ENCODE measurements at regions of chr20 and their contacts with region 1.

Region 1: DNA sequence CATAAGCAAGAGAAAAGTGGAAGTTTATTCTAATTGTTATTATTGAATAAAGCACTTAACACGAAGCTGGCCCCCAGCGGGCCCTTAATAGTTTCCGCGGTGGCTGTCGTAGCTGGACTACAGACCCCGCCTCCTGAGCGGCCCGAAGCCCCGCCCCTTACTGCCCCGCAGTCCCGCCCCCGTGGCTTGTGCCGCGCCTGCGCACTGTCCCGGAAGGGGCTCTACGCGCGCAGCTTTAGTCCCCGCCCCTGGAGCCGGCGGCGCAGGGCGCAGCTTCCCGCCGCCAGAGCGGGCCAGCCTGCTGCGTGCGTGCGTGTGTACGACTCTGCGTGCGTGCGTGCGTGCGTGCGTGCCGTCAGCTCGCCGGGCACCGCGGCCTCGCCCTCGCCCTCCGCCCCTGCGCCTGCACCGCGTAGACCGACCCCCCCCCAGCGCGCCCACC is at the start of gene VAPB:
- DNase-seq: peak; percentile 98
- ATAC-seq: peak; percentile 99
- H3K4me3 Mint-ChIP-seq: peak within 1 kb of the TSS; percentile 100
- H3K27ac Mint-ChIP-seq: peak within 1 kb of the TSS; percentile 97
- H3K4me1 Mint-ChIP-seq: peaks cover 39% of the 10 kb centered on the region
- H3K27me3 Mint-ChIP-seq: peaks cover 2% of the 10 kb centered on the region
- total RNA-seq, gene VAPB: 43.9 to 54.5 TPM

Region 2: DNA sequence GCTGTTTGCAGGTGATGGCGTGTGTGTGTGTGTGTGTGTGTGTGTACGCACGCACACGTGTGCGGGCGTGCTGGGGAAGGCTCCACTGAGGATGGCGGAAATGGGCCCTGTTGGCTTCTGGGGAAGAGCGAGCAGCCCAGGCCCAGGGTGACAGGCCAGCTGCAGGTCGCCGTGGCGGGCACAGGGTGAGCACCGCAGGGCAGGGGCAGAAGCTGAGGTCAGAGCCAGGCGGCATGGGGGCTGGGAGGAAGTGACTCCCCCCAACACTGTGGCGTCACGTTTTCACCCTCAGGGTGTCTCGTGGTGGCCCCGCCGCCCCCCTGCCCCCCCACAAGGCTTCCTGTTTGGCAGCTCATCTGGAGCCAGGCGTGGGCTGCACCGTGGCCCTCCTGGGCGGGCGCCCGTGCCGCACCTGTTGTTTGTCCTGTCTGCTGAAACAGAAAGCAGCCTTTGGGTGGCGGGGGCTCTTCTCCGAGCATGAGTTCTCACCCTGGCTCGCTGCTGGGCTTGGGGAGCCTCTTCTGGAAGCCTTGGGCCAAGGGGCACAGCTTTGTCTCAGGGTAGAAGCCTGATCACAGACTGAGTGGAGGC is 990.6 kb before region 1 on chr20:
- CTCF ChIA-PET with region 1: no interaction called
- POLR2A ChIA-PET with region 1: no interaction called
- intact Hi-C with region 1: loop called in 1 of 2 experiments (anchors 2 kb)
- DNase-seq: peak; percentile 93
- ATAC-seq: peak; percentile 69
- H3K4me3 Mint-ChIP-seq: peak overlapping the region; percentile 74
- H3K27ac Mint-ChIP-seq: peak overlapping the region; percentile 99
- H3K4me1 Mint-ChIP-seq: peaks cover 92% of the 10 kb centered on the region
- H3K27me3 Mint-ChIP-seq: no peaks in the 10 kb centered on the region

Region 3: DNA sequence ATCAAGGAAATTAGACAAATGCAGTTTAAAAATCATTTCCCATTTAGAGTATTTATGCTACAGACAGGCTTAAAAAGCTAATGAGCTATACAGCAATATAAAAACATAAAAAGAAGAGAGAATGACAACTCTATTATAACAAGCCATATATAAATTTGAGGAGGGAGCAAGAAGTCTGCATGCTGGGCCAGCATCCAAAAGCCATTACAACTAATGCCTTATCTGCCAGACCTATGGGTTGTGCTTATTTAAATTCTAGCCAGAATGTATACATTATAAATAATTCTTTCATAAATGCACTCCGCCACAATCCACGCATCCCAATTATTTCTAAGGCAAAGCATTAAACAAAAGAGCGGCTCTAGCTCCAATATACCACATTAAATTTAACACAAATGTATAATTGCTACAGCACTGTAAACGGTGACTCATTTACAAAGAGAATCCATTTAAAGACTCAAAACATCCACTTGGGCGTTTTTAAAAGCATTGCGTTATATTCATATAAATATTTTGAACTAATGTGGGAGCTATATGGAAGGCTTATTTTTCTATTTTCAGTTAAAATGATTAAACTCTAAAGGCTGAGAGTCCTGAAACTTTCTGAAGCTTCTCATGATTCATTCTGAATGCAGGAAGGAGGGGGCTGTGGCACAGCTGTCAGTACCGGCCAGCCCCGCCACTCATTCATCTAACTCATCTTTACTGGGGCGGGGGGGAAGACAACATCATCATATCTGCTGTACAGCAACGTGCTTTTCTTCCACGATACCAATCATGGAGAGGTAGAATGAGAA is 117.1 kb before region 1 on chr20:
- CTCF ChIA-PET with region 1: no interaction called
- POLR2A ChIA-PET with region 1: interaction called, 3 read pairs
- intact Hi-C with region 1: loop called in 1 of 2 experiments (anchors 1 kb)
- DNase-seq: peak; percentile 85
- ATAC-seq: peak; percentile 98
- H3K4me3 Mint-ChIP-seq: no peak overlapping the region
- H3K27ac Mint-ChIP-seq: peak overlapping the region; percentile 6
- H3K4me1 Mint-ChIP-seq: peaks cover 39% of the 10 kb centered on the region
- H3K27me3 Mint-ChIP-seq: no peaks in the 10 kb centered on the region

Region 4: GRCh38 chr20:58407966-58408557 is 19.2 kb after region 1 on chr20:
- CTCF ChIA-PET with region 1: interaction called, 3 read pairs
- POLR2A ChIA-PET with region 1: interaction called, 4 read pairs
- intact Hi-C with region 1: loop called in 1 of 2 experiments (anchors 1 kb)
- DNase-seq: peak; percentile 54
- ATAC-seq: peak; percentile 90
- H3K4me3 Mint-ChIP-seq: peak overlapping the region; percentile 36
- H3K27ac Mint-ChIP-seq: peak overlapping the region; percentile 87
- H3K4me1 Mint-ChIP-seq: peaks cover 32% of the 10 kb centered on the region
- H3K27me3 Mint-ChIP-seq: no peaks in the 10 kb centered on the region

Region 5: DNA sequence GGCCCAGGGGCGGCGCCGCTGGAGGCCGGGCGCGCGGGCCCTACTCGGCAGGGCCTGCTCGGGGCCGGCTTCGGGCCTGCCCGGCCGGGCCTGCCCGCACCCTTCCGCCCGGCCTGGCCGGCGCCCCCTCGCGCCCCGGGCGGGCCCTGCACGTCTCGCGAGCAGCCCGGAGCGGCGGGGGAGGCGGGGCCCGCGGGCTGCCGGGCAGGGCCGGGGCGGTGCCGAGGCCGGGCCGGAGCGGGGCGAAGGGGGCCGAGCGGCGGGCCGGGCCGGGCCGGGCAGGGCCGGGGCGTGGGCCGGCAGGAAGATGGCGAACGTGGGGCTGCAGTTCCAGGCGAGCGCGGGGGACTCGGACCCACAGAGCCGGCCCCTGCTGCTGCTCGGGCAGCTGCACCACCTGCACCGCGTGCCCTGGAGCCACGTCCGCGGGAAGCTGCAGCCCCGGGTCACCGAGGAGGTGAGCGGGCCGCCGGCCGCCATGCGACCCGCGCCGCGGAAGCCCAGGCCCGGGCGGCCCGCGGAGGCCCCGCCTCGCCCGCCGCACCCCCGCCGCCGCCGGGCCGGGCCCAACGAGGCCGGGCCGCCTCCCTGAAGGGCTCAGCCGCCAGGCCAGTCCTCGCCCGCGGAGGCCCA is 303.8 kb after region 1 on chr20 and contains the start of gene NPEPL1:
- CTCF ChIA-PET with region 1: no interaction called
- POLR2A ChIA-PET with region 1: no interaction called
- intact Hi-C with region 1: loop called in 1 of 2 experiments (anchors 1 kb)
- DNase-seq: peak; percentile 82
- ATAC-seq: peak; percentile 99
- H3K4me3 Mint-ChIP-seq: peak within 1 kb of the TSS; percentile 63
- H3K27ac Mint-ChIP-seq: peak within 1 kb of the TSS; percentile 53
- H3K4me1 Mint-ChIP-seq: peaks cover 13% of the 10 kb centered on the region
- H3K27me3 Mint-ChIP-seq: no peaks in the 10 kb centered on the region
- total RNA-seq, gene NPEPL1: 13.6 to 15.2 TPM

Measured in activated CD4-positive, alpha-beta T cell treated with anti-CD3 and anti-CD28 coated beads for 36 hours (primary cell).